A549 (cell line): ENCODE measurements at regions of chr14 and their contacts with region 1.

Region 1: GRCh38 chr14:104137297-104138097 is 890 bp upstream of the KIF26A start:
- DNase-seq: peak; percentile 76 to 80
- ATAC-seq: peak; percentile 53 to 89
- H3K4me3 ChIP-seq: peak overlapping the region; percentile 55
- H3K27ac ChIP-seq: peak overlapping the region; percentile 54 to 87
- H3K4me1 ChIP-seq: peaks cover 26% of the 10 kb centered on the region
- CTCF ChIP-seq: peak; percentile 90
- EP300 ChIP-seq: no peak
- POLR2A ChIP-seq: no peak
- RAD21 ChIP-seq: peak; percentile 74 to 94

Region 2: GRCh38 chr14:104399432-104400151 is 262.1 kb after region 1 on chr14:
- CTCF ChIA-PET with region 1: no interaction called
- POLR2A ChIA-PET with region 1: no interaction called
- DNase-seq: no peak
- ATAC-seq: no peak
- H3K4me3 ChIP-seq: no peak overlapping the region
- H3K27ac ChIP-seq: no peak overlapping the region
- H3K4me1 ChIP-seq: no peaks in the 10 kb centered on the region
- CTCF ChIP-seq: no peak
- EP300 ChIP-seq: no peak
- POLR2A ChIP-seq: no peak
- RAD21 ChIP-seq: no peak

Region 3: DNA sequence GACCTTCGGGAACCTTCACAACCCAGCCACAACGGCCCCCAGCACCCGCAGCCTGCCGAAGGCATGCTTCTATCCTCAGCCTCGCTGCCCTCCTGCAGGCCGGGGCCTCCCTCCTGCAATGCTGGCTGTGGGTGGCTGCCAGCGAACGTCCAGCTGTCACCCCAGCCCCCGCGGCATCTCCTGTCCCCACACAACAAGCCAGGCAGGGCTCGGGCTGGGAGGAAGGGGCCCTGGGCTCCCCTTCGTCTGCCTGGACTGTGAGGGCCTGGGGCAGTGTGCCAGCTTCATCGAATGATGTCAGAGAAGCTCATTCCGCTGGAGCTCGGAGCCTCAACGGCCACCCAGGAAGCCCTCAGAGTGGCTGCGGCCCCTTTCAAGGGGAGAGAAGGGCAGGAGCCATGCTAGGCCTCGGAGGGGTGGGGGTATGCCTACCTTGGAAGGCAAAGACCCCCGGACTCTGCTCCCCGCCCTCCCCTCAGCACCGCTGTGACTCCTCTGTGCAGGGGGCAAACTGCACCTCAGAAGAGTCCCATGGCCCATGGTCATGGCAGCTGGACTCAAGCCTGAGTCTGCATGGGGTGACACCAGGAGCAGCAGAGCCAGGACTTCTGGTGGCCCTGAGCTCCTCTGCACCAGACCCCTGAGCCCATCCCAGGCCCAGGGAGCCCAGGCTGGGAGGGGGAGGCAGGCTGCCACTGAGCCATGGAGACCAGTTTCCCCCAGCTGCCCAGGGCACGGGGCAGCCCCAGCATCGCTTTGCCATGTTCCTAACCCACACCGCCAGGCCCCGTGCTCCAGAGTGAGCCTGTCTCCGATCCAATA is 417.3 kb after region 1 on chr14:
- CTCF ChIA-PET with region 1: interaction called, 31 read pairs
- POLR2A ChIA-PET with region 1: no interaction called
- DNase-seq: no peak
- ATAC-seq: no peak
- H3K4me3 ChIP-seq: no peak overlapping the region
- H3K27ac ChIP-seq: no peak overlapping the region
- H3K4me1 ChIP-seq: no peaks in the 10 kb centered on the region
- CTCF ChIP-seq: no peak
- EP300 ChIP-seq: no peak
- POLR2A ChIP-seq: no peak
- RAD21 ChIP-seq: no peak